Posterior cingulate gyrus (tissue), 11 donors: ENCODE measurements at regions of chr20 and their contacts with region 1.

Region 1: GRCh38 chr20:34955232-34956040 is at the starts of genes GSS and MYH7B:
- DNase-seq: peak; percentile 93 to 99 (median 96)

Region 2: DNA sequence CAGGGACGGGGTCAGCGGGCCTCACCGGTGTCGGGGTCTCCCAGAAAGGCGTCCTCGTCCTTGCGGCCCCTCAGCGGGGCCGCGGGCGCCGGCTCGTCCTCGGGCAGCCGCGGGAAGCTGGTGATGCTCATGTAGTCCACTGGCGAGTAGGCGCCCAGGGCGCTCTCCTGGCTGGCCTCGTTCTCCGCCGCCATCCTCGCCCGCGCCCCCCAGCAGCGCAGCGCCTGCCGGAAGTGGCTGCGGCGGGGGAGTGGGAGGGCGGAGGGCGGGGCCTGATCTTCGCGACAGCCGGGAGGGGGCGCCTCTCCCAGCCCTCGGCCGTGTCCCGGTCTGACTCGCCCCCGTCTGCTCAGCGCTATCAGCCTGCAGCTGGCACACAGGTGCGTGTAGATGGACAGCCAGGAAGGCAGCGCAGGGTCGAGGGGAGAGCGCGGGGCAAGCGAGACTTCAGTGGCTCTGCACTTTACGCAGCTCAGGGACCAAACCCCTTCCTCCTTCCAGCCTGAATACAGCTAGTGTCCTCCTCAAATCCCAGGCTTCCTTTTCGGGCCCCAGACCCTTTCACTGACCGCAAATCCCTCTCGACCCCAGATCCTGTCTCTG is 82.7 kb before region 1 on chr20 and contains the start of gene GGT7:
- intact Hi-C with region 1: loop called (anchors 1 kb)
- DNase-seq: peak; percentile 79 to 97 (median 86)

Region 3: DNA sequence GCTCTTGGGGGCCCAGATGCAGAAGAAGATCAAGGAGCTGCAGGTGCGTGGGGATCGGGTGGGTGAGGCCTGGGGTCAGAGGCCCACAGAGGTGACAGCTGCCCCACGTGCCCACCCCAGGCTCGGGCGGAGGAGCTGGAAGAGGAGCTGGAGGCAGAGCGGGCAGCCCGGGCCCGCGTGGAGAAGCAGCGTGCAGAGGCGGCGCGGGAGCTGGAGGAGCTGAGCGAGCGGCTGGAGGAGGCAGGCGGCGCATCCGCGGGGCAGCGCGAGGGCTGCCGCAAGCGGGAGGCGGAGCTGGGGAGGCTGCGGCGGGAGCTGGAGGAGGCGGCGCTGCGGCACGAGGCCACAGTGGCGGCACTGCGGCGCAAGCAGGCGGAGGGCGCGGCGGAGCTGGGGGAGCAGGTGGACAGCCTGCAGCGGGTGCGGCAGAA is 41.7 kb after region 1 on chr20:
- intact Hi-C with region 1: loop called (anchors 5 kb)
- DNase-seq: peak; percentile 36 to 97 (median 77)